ENCODE measurements at regions of chr2 and their contacts with region 1.

Region 1: DNA sequence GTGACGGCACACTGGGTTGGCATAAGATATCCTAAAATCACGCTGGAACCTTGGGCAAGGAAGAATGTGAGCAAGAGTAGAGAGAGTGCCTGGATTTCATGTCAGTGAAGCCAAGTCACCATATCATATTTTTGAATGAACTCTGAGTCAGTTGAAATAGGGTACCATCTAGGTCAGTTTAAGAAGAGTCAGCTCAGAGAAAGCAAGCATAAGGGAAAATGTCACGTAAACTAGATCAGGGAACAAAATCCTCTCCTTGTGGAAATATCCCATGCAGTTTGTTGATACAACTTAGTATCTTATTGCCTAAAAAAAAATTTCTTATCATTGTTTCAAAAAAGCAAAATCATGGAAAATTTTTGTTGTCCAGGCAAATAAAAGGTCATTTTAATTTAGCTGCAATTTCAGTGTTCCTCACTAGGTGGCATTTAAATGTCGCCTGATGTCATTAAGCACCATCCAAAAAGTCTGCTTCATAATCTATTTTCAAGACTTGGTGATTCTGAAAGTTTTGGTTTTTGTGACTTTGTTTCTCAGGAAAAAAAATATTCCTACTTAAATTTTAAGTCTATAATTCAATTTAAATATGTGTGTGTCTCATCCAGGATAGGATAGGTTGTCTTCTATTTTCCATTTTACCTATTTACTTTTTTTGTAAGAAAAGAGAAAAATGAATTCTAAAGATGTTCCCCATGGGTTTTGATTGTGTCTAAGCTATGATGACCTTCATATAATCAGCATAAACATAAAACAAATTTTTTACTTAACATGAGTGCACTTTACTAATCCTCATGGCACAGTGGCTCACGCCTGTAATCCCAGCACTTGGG is 19.6 kb downstream of the RSAD2 start:
- DNase-seq: no peak
- H3K4me3 ChIP-seq: no peak overlapping the region
- CTCF ChIP-seq: no peak
- POLR2A ChIP-seq: no peak

Region 2: GRCh38 chr2:6877402-6878304 is 19.5 kb before region 1 on chr2 and contains the start of gene RSAD2:
- intact Hi-C with region 1: no loop called
- DNase-seq: no peak
- H3K4me3 ChIP-seq: peak within 1 kb of the TSS; percentile 27
- CTCF ChIP-seq: no peak
- POLR2A ChIP-seq: no peak
- total RNA-seq, gene RSAD2: 0.08 to 1.5 (median 0.45) TPM in 3 of 4 donors, not detected in the other

Region 3: DNA sequence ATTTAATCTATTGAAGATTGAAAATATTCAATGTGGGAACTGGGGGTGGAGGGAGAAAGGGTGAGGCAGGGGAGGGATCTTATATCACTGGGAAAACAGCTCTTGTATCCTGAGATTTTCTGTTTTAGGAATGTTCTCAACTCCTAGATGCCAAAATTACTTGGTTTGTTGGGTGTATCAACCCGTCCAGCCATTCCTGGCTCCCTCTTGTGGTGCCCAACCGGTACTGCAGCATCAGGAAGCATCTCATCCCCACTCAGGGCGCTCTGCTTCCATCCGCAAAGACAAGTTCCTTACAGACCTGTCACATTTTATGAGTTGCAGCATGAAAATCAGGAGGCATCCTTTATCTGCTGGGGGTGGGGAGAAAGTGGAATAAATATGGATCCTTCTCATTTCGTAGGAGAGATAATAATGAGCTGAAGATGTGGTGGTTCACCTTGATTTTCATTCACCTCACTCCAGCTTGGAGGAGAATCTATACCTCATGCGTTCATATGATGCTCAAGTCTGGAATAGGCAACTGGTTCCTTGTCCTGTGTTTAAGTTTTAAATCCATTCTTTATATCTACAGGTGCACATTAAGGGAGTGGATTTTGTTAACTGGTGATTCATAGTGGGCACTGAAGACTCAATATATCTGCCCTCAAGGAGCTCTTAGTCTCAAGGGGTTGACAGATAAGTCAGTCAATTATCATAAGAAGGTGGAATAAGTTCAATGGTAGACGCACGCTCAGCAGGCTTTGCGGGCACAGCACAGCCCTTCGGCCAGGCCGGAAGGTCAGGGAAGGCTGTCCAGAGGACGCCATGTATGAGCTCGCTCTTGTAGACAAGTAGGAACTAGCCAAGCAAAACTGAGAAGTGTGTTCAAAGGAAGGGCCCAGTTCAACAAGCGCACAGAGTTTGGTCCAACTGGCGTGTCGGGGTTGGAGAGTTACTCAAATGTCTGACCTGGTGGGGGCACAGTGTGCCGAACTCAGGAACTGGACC is 147.4 kb after region 1 on chr2:
- intact Hi-C with region 1: loop called (anchors 5 kb)
- DNase-seq: peak; percentile 63 to 93
- H3K4me3 ChIP-seq: no peak overlapping the region
- CTCF ChIP-seq: peak in 1 of 3 donors; percentile 87
- POLR2A ChIP-seq: no peak

Region 4: GRCh38 chr2:7191932-7192331 is 294.8 kb after region 1 on chr2:
- intact Hi-C with region 1: no loop called
- DNase-seq: no peak
- H3K4me3 ChIP-seq: no peak overlapping the region
- CTCF ChIP-seq: no peak
- POLR2A ChIP-seq: no peak